ENCODE measurements at regions of chr20 and their contacts with region 1.

Region 1: DNA sequence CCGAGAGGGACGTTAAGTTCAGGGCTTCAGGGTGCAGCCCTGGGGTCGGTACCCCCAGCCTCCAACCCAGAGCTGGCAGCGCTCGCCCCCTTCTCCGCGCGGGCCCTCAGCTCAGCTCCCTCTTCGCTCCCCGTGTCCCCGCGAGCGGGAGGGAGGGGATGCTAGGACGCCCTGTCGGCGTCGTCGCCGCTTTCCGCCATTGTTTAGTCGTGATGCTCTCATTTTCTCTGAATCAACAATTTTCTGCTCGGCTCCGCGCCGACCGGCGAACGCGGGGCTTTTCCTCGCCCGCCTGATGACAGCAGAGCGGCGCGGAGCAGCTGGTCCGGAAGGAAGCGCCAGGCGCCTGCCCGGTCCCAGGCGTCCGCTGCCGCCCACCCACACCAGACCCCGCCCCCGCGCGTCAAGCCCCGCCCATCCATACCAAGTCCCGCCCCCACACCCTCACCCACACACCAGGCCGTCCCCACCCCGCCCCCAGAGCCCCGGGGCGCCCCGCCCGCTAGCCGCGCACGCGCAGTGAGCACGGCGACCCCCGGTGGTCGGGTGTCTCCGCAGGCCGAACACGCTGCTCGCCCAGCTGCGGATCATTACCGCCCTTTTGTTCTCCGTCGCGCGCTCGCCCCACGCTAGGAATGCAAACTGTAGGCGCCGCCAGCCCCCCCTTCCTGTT is 50.1 kb upstream of the SLC32A1 start:
- DNase-seq: no peak
- ATAC-seq: 0 out of 6 replicates have a peak, but pooled peaks of 1 of the 2 experiments have one; percentile 20
- H3K4me3 ChIP-seq: no peak overlapping the region
- H3K27ac ChIP-seq: no peak overlapping the region
- H3K4me1 ChIP-seq: no peaks in the 10 kb centered on the region
- CTCF ChIP-seq: no peak
- EP300 ChIP-seq: no peak
- POLR2A ChIP-seq: no peak
- RAD21 ChIP-seq: no peak

Region 2: GRCh38 chr20:38658879-38659596 is 15.2 kb before region 1 on chr20:
- CTCF ChIA-PET with region 1: interaction called, 14 read pairs
- POLR2A ChIA-PET with region 1: no interaction called
- DNase-seq: peak; percentile 38 to 79
- ATAC-seq: peak; percentile 93 to 98
- H3K4me3 ChIP-seq: no peak overlapping the region
- H3K27ac ChIP-seq: no peak overlapping the region
- H3K4me1 ChIP-seq: no peaks in the 10 kb centered on the region
- CTCF ChIP-seq: peak; percentile 44
- EP300 ChIP-seq: no peak
- POLR2A ChIP-seq: no peak
- RAD21 ChIP-seq: peak in 1 of 2 experiments; percentile 45; a peak in 3 of 5 replicates

Measured in A549 (cell line).